CD8-positive, alpha-beta memory T cell (primary cell): ENCODE measurements at regions of chr1 and their contacts with region 1.

Region 1: DNA sequence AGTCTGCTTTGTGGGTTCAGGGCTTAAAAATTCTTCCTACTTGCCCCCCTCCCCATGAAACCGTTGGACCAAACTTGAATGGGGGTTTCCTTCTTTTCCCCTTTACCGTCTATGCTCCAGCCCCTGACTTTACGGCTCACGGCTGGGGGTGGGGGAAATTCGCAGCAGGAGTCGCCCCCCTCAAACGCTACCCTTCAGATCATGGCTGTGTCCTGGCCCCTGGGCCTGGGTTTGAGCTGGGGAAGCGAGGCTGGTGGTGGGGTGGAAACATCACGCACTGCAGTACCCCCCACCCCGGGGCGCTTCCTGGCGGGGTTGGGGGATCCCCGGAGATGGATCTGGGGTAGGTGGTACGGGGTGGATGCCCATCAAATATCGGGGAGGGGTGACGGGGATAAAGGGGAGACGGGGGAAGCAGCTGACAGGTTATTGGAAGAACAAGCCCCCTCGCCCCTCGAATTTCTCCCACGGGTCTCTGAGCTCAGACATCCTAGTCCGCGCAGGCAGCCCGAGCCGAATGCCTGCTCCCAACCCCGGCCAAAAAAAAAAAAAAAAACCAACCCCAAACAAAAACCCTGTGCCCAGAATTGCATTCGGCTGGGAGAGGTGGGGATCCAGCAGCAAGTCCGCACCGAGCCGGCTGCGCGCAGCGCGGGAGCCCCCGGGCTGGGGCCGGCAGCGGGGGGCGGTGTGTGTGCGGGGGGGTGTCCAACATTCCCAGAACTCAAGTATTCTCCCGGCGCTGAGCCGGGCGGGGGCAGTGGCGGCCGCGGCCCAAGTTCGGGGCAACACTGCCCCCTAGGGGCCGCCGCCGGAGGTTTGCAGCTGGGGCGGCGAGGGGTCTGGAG is 59.0 kb upstream of the ACOT11 start:
- DNase-seq: peak; percentile 56 to 78 (median 67)
- H3K4me3 ChIP-seq: peak overlapping the region; percentile 83
- H3K4me3 Mint-ChIP-seq: peak overlapping the region; percentile 85 to 93 (median 86)
- H3K27ac ChIP-seq: peak overlapping the region; percentile 75
- H3K27ac Mint-ChIP-seq: peak overlapping the region; percentile 75 to 97 (median 84)
- H3K4me1 ChIP-seq: peaks cover 35% of the 10 kb centered on the region
- H3K4me1 Mint-ChIP-seq: peaks cover 41 to 47% (median 45%) of the 10 kb centered on the region in 3 donors
- H3K27me3 ChIP-seq: no peaks in the 10 kb centered on the region
- H3K27me3 Mint-ChIP-seq: peaks cover 5 to 8% of the 10 kb centered on the region in 2 donors

Region 2: GRCh38 chr1:54081306-54082270 is 407.4 kb before region 1 on chr1:
- CTCF ChIA-PET with region 1: interaction called, 12 read pairs
- POLR2A ChIA-PET with region 1: no interaction called
- DNase-seq: peak; percentile 26 to 62 (median 33)
- H3K4me3 ChIP-seq: no peak overlapping the region
- H3K4me3 Mint-ChIP-seq: no peak overlapping the region
- H3K27ac ChIP-seq: no peak overlapping the region
- H3K27ac Mint-ChIP-seq: no peak overlapping the region
- H3K4me1 ChIP-seq: no peaks in the 10 kb centered on the region
- H3K4me1 Mint-ChIP-seq: peaks cover 3 to 7% (median 4%) of the 10 kb centered on the region in 3 donors
- H3K27me3 ChIP-seq: no peaks in the 10 kb centered on the region
- H3K27me3 Mint-ChIP-seq: peaks cover 0 to 2% of the 10 kb centered on the region in 2 donors

Region 3: DNA sequence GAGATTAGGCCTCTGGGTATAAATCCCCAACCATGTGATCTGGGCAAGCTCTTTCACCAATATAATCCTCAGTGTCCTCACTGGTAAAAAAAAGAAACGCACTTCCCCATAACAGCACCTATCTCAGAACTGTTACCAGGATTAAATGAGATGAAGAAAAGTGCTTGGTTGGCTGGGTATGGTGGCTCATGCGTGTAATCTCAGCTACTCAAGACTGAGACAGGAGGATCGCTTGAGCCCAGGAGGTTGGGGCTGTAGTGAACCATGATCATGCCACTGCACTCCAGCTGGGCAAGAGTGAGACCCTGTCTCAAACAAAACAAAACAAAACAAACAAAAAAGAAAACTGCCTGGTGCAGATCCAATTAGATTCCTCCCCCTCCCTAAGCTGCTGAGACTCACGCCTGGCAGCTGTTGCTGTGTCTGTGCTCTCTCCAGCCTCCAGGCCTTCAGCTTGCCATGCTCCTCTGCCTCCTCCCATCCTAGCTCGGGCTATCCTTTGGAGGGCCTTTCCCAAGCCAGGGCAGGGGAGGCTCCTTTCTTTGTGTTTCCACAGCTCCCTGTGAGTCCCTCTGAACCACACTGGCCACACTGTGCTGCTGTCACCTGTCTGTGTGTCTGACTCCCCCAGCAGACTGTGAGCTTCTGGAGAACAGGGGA is 308.2 kb before region 1 on chr1:
- CTCF ChIA-PET with region 1: interaction called, 25 read pairs
- POLR2A ChIA-PET with region 1: interaction called, 3 read pairs
- DNase-seq: peak in 1 of 5 donors; percentile 30
- H3K4me3 ChIP-seq: no peak overlapping the region
- H3K4me3 Mint-ChIP-seq: no peak overlapping the region
- H3K27ac ChIP-seq: no peak overlapping the region
- H3K27ac Mint-ChIP-seq: peak overlapping the region in 4 of 8 donors; percentile 12 to 57 (median 44)
- H3K4me1 ChIP-seq: no peaks in the 10 kb centered on the region
- H3K4me1 Mint-ChIP-seq: no peaks in the 10 kb centered on the region
- H3K27me3 ChIP-seq: no peaks in the 10 kb centered on the region
- H3K27me3 Mint-ChIP-seq: no peaks in the 10 kb centered on the region

Region 4: GRCh38 chr1:54397090-54397591 is 91.9 kb before region 1 on chr1:
- CTCF ChIA-PET with region 1: interaction called, 10 read pairs
- POLR2A ChIA-PET with region 1: no interaction called
- DNase-seq: no peak
- H3K4me3 ChIP-seq: no peak overlapping the region
- H3K4me3 Mint-ChIP-seq: no peak overlapping the region
- H3K27ac ChIP-seq: no peak overlapping the region
- H3K27ac Mint-ChIP-seq: peak overlapping the region in 1 of 8 donors; percentile 85
- H3K4me1 ChIP-seq: peaks cover 13% of the 10 kb centered on the region
- H3K4me1 Mint-ChIP-seq: peaks cover 53 to 63% (median 56%) of the 10 kb centered on the region in 3 donors
- H3K27me3 ChIP-seq: no peaks in the 10 kb centered on the region
- H3K27me3 Mint-ChIP-seq: no peaks in the 10 kb centered on the region

Region 5: GRCh38 chr1:54464482-54465146 is 24.4 kb before region 1 on chr1:
- CTCF ChIA-PET with region 1: interaction called, 10 read pairs
- POLR2A ChIA-PET with region 1: interaction called, 3 read pairs
- DNase-seq: no peak
- H3K4me3 ChIP-seq: peak overlapping the region; percentile 19
- H3K4me3 Mint-ChIP-seq: no peak overlapping the region
- H3K27ac ChIP-seq: peak overlapping the region; percentile 12
- H3K27ac Mint-ChIP-seq: peak overlapping the region in 1 of 8 donors; percentile 53
- H3K4me1 ChIP-seq: peaks cover 35% of the 10 kb centered on the region
- H3K4me1 Mint-ChIP-seq: peaks cover 44 to 52% (median 46%) of the 10 kb centered on the region in 3 donors
- H3K27me3 ChIP-seq: no peaks in the 10 kb centered on the region
- H3K27me3 Mint-ChIP-seq: peaks cover 0 to 2% of the 10 kb centered on the region in 2 donors